Naive thymus-derived CD4-positive, alpha-beta T cell (primary cell): ENCODE measurements at regions of chr9 and their contacts with region 1.

Region 1: DNA sequence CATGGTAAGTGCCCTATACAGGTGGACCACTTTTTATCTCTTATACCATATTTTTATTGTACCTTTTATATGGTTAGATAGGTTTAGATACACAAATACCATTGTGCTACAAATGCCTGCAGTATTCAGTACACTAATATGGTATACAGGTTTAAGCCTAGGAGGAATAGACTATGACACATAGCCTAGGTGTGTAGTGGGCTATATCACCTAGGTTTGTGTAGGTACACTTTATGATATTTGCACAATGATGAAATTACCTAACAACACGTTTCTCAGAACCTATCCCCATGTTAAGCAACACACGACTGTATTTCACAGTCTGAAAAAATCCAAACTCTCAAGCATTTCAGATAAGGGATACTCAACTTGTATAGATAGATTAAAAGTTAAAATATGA is 9.6 kb upstream of the PHF24 start:
- DNase-seq: no peak
- ATAC-seq: no peak
- H3K4me3 ChIP-seq: no peak overlapping the region
- H3K4me3 Mint-ChIP-seq: no peak overlapping the region
- H3K27ac ChIP-seq: no peak overlapping the region
- H3K27ac Mint-ChIP-seq: no peak overlapping the region
- H3K4me1 ChIP-seq: no peaks in the 10 kb centered on the region
- H3K4me1 Mint-ChIP-seq: no peaks in the 10 kb centered on the region
- H3K27me3 ChIP-seq: peaks cover 0 to 4% of the 10 kb centered on the region in 2 donors
- H3K27me3 Mint-ChIP-seq: peaks cover 14 to 46% (median 34%) of the 10 kb centered on the region in 5 donors

Region 2: DNA sequence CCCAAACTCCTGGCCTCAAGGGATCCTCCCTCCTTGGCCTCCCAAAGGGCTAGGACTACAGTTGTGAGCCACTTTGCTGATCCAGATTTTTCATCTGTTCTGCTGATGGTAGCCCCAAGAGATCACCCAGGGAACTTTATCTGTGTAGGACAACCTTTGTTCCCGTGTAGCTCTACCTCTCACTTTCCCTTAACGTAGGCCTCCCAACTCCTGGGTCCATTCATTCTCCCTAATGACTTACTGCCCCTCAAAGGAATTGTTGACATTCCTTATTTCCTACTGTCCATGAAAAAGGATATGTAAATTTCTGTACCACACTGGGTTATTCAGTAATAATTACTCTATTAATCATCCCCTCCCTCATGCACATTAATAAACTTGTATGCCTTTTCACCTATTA is 41.4 kb before region 1 on chr9:
- CTCF ChIA-PET with region 1: no interaction called
- POLR2A ChIA-PET with region 1: no interaction called
- intact Hi-C with region 1: loop called in 1 of 2 experiments (anchors 1 kb)
- DNase-seq: no peak
- ATAC-seq: no peak
- H3K4me3 ChIP-seq: no peak overlapping the region
- H3K4me3 Mint-ChIP-seq: no peak overlapping the region
- H3K27ac ChIP-seq: no peak overlapping the region
- H3K27ac Mint-ChIP-seq: no peak overlapping the region
- H3K4me1 ChIP-seq: no peaks in the 10 kb centered on the region
- H3K4me1 Mint-ChIP-seq: no peaks in the 10 kb centered on the region
- H3K27me3 ChIP-seq: no peaks in the 10 kb centered on the region
- H3K27me3 Mint-ChIP-seq: peaks cover 4 to 42% (median 21%) of the 10 kb centered on the region in 5 donors